Activated naive CD4-positive, alpha-beta T cell treated with anti-CD3 and anti-CD28 coated beads, Interleukin-2, amount 10 ng/mL, durations not matched to agents 7 days and 5 days (primary cell): ENCODE measurements at regions of chr6 and their contacts with region 1.

Region 1: DNA sequence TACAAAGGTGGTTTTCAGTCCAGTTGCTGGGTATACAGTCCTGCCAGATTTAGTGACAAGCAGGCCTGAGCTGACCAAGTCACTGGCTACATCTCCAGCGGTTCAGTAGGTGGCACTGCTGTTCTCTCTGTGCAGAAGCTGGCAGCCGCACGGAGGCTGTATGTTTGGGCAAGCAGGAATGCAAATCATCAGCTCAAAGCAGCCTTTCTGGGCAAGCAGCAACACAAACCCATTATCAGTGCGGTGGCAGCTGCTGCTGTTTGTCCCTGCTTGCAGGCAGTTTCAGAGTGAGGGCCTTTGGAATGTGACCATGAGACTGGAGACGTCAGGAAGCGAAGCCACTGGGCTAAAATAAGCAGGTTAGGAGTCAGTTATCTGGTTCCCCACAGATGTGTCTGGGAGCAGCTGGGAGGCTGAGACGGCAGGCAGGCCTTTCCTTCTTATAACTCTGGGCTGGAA is 72.5 kb downstream of the TXLNB start:
- DNase-seq: peak; percentile 84
- H3K4me3 Mint-ChIP-seq: no peak overlapping the region
- H3K27ac Mint-ChIP-seq: peak overlapping the region; percentile 20
- H3K4me1 Mint-ChIP-seq: peaks cover 14% of the 10 kb centered on the region
- H3K27me3 Mint-ChIP-seq: no peaks in the 10 kb centered on the region

Region 2: GRCh38 chr6:139134817-139135581 is 84.3 kb before region 1 on chr6 and contains the start of gene HECA:
- CTCF ChIA-PET with region 1: interaction called, 10 read pairs
- DNase-seq: peak; percentile 99
- H3K4me3 Mint-ChIP-seq: peak within 1 kb of the TSS; percentile 82
- H3K27ac Mint-ChIP-seq: peak within 1 kb of the TSS; percentile 99
- H3K4me1 Mint-ChIP-seq: peaks cover 69% of the 10 kb centered on the region
- H3K27me3 Mint-ChIP-seq: no peaks in the 10 kb centered on the region

Region 3: GRCh38 chr6:139230391-139230840 is 11.1 kb after region 1 on chr6:
- CTCF ChIA-PET with region 1: interaction called, 12 read pairs
- DNase-seq: no peak
- H3K4me3 Mint-ChIP-seq: no peak overlapping the region
- H3K27ac Mint-ChIP-seq: no peak overlapping the region
- H3K4me1 Mint-ChIP-seq: no peaks in the 10 kb centered on the region
- H3K27me3 Mint-ChIP-seq: no peaks in the 10 kb centered on the region

Region 4: GRCh38 chr6:139291813-139292619 is 72.7 kb after region 1 on chr6 and contains the start of gene TXLNB:
- CTCF ChIA-PET with region 1: interaction called, 32 read pairs
- DNase-seq: peak; percentile 92
- H3K4me3 Mint-ChIP-seq: peak within 1 kb of the TSS; percentile 70
- H3K27ac Mint-ChIP-seq: peak within 1 kb of the TSS; percentile 97
- H3K4me1 Mint-ChIP-seq: peaks cover 54% of the 10 kb centered on the region
- H3K27me3 Mint-ChIP-seq: no peaks in the 10 kb centered on the region

Region 5: DNA sequence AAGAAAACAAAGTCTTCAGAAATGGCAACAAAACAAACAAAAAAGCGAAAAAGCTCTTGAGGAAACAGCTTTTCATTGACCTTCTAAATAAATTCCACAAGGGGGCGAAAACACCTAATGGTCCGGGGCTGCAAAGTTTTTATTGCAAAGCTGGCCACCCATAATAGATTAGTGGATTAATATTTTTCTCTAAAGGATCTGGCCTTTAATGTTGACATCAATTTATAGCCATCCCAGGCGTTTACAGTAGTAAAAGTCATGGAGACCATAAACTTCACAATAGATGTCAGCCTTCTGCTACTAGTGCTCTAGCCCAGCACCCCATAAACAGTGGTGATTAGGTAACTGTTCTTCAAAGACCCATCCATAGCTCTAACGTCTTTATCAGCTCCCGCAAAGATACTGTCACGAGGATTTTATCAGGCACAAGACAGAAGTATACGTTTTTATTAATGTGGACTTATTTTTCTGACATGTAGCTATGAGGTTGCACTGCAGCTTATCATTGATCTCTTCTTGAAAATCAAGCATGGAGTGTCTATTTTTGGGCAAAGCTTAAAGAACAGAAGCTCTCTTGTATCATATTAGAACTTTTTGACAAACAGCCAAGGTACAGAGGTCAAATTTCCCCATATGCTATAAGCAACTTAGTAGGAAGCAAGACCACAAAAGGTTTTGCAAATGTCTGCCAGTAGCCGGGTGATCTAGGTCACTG is 150.4 kb after region 1 on chr6:
- CTCF ChIA-PET with region 1: interaction called, 144 read pairs
- DNase-seq: peak; percentile 27
- H3K4me3 Mint-ChIP-seq: no peak overlapping the region
- H3K27ac Mint-ChIP-seq: peak overlapping the region; percentile 46
- H3K4me1 Mint-ChIP-seq: peaks cover 35% of the 10 kb centered on the region
- H3K27me3 Mint-ChIP-seq: peaks cover 3% of the 10 kb centered on the region